Colonic mucosa (tissue), 4 donors: ENCODE measurements at regions of chr3 and their contacts with region 1.

Region 1: GRCh38 chr3:7285505-7285904 is 424.6 kb downstream of the GRM7 start:
- DNase-seq: no peak
- H3K4me3 ChIP-seq: no peak overlapping the region
- H3K27ac ChIP-seq: no peak overlapping the region
- H3K4me1 ChIP-seq: no peaks in the 10 kb centered on the region
- H3K27me3 ChIP-seq: no peaks in the 10 kb centered on the region
- CTCF ChIP-seq: no peak

Region 2: GRCh38 chr3:7371693-7372572 is 86.4 kb after region 1 on chr3:
- intact Hi-C with region 1: no loop called
- DNase-seq: no peak
- H3K4me3 ChIP-seq: no peak overlapping the region
- H3K27ac ChIP-seq: no peak overlapping the region
- H3K4me1 ChIP-seq: no peaks in the 10 kb centered on the region
- H3K27me3 ChIP-seq: no peaks in the 10 kb centered on the region
- CTCF ChIP-seq: no peak

Region 3: GRCh38 chr3:7407107-7407506 is 121.6 kb after region 1 on chr3:
- intact Hi-C with region 1: no loop called
- DNase-seq: no peak
- H3K4me3 ChIP-seq: no peak overlapping the region
- H3K27ac ChIP-seq: no peak overlapping the region
- H3K4me1 ChIP-seq: no peaks in the 10 kb centered on the region
- H3K27me3 ChIP-seq: no peaks in the 10 kb centered on the region
- CTCF ChIP-seq: no peak

Region 4: GRCh38 chr3:7546253-7546652 is 260.7 kb after region 1 on chr3:
- intact Hi-C with region 1: loop called (anchors 10 kb)
- DNase-seq: no peak
- H3K4me3 ChIP-seq: no peak overlapping the region
- H3K27ac ChIP-seq: no peak overlapping the region
- H3K4me1 ChIP-seq: no peaks in the 10 kb centered on the region
- H3K27me3 ChIP-seq: no peaks in the 10 kb centered on the region
- CTCF ChIP-seq: no peak

Region 5: DNA sequence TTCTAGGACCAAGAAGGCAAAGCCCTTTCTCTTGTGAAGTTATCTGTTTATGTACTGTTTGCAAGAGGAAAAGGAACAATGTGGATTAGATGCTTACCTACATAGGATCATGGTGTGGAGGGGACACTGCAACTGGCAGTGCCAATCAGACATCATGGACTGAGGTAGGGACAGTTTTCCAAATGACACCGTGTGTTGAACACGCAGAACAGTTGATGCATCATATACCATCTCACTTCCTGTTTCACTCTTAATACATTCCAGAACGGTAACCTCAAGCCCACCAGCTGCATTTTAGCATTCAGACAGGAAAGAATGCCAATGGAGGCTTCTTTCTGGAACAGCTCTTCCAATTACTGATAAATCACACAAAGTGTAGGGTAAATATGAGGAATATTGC is 818.4 kb after region 1 on chr3:
- intact Hi-C with region 1: loop called (anchors 10 kb)
- DNase-seq: no peak
- H3K4me3 ChIP-seq: no peak overlapping the region
- H3K27ac ChIP-seq: no peak overlapping the region
- H3K4me1 ChIP-seq: no peaks in the 10 kb centered on the region
- H3K27me3 ChIP-seq: no peaks in the 10 kb centered on the region
- CTCF ChIP-seq: no peak